Heart left ventricle (tissue), 16 donors: ENCODE measurements at regions of chr4 and their contacts with region 1.

Region 1: DNA sequence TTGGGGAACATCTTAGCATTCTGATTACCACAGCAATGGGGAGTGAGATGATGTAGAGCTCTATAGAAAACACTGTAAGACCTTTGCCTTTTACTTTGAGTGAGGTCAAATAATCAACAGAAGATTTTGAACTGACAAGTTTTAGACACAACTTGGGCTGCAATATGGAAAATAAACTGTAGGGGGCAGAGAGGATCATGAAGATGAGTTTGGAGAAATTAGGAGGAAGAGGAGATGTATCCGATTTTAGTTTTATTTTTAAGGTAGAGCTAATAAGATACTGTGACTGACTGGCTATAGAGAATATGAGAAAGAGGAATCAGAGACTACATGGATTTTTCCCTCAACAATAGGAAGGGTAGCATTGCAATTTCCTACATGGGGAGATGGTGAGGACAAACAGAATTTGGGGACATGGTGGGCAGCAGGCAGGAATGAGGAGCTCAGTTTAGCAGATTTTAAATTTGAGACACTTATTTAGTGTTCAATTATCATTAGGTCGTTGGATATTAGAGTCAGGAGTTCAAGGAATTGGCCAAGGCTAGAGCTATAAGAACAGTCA is 563.1 kb downstream of the INPP4B start:
- DNase-seq: no peak
- ATAC-seq: no peak
- H3K4me3 ChIP-seq: no peak overlapping the region
- H3K27ac ChIP-seq: no peak overlapping the region
- H3K4me1 ChIP-seq: peaks cover 0 to 5% (median 0%) of the 10 kb centered on the region in 12 donors
- H3K27me3 ChIP-seq: no peaks in the 10 kb centered on the region
- CTCF ChIP-seq: peak; percentile 39 to 60 (median 48)
- POLR2A ChIP-seq: no peak

Region 2: GRCh38 chr4:142181021-142181420 is 101.9 kb before region 1 on chr4:
- intact Hi-C with region 1: loop called in 1 of 10 experiments (anchors 10 kb)
- DNase-seq: no peak
- ATAC-seq: no peak
- H3K4me3 ChIP-seq: no peak overlapping the region
- H3K27ac ChIP-seq: no peak overlapping the region
- H3K4me1 ChIP-seq: no peaks in the 10 kb centered on the region
- H3K27me3 ChIP-seq: no peaks in the 10 kb centered on the region
- CTCF ChIP-seq: no peak
- POLR2A ChIP-seq: no peak

Region 3: DNA sequence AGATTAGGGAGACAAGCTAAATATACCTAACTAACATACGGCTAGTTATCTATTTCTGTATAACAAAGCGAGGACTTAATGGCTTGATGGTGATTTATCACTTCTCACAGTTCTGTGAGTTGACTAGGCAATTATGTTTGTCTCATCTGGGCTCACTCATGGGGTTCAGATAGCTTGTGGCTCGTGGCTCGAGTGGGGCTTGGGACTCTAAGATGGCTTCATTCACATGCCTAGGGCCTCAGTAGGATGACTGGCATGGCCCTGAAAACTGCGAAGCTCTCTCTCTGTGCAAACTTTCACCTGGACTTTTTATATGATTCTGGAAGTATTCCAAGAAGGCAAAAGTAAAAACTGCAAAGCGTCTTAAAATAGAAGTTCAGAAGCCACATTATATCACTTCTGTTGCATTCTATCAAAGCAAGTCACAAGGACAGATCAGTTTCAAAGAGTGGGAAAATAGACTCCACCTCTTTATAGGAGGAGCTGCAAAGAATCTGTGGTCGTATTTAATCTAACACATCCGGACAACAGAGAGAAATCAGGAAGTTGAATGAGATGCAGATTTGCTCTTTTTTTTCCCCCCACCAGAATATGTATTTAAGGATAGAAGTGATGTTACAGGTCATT is 72.0 kb after region 1 on chr4:
- intact Hi-C with region 1: no loop called
- DNase-seq: no peak
- ATAC-seq: peak in 2 of 4 donors; percentile 20 to 63
- H3K4me3 ChIP-seq: no peak overlapping the region
- H3K27ac ChIP-seq: peak overlapping the region in 9 of 12 donors; percentile 6 to 58 (median 31)
- H3K4me1 ChIP-seq: peaks cover 0 to 66% (median 48%) of the 10 kb centered on the region in 12 donors
- H3K27me3 ChIP-seq: no peaks in the 10 kb centered on the region
- CTCF ChIP-seq: no peak
- POLR2A ChIP-seq: no peak

Region 4: GRCh38 chr4:142713282-142714030 is 430.5 kb after region 1 on chr4:
- intact Hi-C with region 1: loop called in 1 of 10 experiments (anchors 5 kb)
- DNase-seq: no peak
- ATAC-seq: no peak
- H3K4me3 ChIP-seq: no peak overlapping the region
- H3K27ac ChIP-seq: no peak overlapping the region
- H3K4me1 ChIP-seq: peaks cover 0 to 8% (median 0%) of the 10 kb centered on the region in 12 donors
- H3K27me3 ChIP-seq: no peaks in the 10 kb centered on the region
- CTCF ChIP-seq: no peak
- POLR2A ChIP-seq: no peak